ENCODE measurements at regions of chr13 and their contacts with region 1.

Region 1: DNA sequence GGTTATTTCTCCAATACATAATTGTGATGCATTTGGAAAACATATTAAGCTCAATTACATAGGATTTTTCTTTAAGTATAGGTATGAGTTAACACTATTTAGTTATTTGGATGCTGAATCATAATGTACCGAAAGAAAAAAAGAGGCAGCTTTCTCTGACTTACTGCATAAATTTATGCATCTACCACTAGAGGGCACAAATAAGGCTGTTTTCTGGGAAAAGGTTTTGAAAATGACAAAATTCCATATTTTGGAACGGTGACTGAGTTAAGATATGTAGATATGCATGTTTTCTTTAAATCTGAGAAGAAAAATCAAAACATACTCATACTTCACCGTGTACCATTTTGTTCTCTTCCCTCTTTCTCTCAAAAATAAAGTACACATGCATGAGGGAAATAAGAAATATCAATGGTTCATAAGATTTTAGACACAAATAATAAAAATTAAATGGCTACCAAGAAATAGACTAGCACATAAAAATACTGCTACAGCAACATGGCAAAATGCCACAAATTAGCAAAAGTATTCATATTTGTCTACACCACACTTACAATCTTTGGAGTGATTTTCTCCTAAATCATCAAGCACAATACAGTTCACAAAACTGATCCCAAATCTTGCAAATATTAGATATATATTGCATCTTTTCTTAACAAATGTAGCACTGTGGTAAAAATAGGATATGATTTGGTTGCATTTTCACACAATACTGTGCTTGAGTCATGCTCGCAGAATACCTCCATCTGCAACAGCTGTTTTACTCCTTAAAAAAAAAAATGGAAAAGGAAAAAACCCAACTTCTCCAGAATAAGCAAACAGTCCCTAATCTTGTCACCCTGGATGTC is 260.0 kb downstream of the FGF14 start:
- DNase-seq: no peak
- ATAC-seq: no peak

Region 2: DNA sequence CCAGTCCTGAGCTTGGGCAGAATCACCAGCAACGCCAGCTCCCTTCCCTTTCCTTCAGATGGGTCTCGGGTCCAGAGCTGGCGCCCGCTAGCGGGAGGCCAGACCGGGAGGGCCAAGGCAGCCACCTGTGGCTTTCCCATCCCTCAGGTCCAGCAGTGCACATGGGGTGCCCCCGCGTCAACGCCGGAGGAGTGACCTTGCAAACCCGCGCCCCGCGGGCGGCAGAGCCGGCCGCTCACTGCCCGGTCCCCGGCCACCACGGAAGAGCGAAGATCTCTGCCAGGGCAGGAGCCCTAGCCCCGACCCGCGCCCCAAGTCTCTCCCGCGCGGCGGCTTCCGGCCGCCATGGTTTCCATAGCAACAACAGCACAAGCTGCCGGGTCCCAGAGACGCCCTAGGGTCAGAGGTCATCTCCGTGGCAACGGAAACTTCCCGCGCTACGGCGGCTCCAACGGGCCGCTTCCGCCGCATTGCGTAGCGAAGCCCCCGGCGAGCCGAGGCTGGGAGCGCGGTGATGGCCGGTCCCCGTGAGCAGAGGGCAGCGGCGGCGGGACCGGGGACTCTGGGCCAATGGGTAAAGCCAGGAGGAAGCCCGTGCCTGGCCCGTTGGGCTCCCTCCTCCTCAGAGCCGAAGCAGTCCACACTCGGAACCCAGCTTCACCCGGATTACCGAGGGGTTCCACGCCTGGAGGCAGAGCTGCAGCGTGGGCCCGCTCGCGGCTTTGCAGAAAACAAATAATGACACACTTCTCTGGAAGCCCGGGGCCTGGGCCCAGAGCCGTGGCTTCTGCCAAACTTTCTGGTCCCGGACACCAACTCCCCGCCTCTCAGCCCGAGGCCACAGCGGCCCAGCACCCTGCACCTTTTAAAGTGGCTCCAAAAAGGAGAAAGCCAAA is 252.6 kb after region 1 on chr13:
- intact Hi-C with region 1: loop called (anchors 5 kb)
- DNase-seq: peak; percentile 94
- ATAC-seq: peak; percentile 97

Region 3: GRCh38 chr13:102460801-102461200 is 319.0 kb after region 1 on chr13:
- intact Hi-C with region 1: loop called (anchors 5 kb)
- DNase-seq: no peak
- ATAC-seq: no peak

Measured in Right ventricle myocardium inferior (tissue), 1 donor.